Activated CD4-positive, alpha-beta T cell treated with anti-CD3 and anti-CD28 coated beads, Interleukin-2, amount 10 ng/mL, durations not matched to agents 24 days and 14 days (primary cell): ENCODE measurements at regions of chr11 and their contacts with region 1.

Region 1: GRCh38 chr11:18526521-18527296 is at the start of gene TSG101:
- DNase-seq: peak; percentile 98
- H3K4me3 Mint-ChIP-seq: peak within 1 kb of the TSS; percentile 99
- H3K27ac Mint-ChIP-seq: peak within 1 kb of the TSS; percentile 100
- H3K4me1 Mint-ChIP-seq: peaks cover 29% of the 10 kb centered on the region
- H3K27me3 Mint-ChIP-seq: no peaks in the 10 kb centered on the region
- total RNA-seq, gene TSG101: 39.6 and 43.5 TPM in 2 replicates

Region 2: DNA sequence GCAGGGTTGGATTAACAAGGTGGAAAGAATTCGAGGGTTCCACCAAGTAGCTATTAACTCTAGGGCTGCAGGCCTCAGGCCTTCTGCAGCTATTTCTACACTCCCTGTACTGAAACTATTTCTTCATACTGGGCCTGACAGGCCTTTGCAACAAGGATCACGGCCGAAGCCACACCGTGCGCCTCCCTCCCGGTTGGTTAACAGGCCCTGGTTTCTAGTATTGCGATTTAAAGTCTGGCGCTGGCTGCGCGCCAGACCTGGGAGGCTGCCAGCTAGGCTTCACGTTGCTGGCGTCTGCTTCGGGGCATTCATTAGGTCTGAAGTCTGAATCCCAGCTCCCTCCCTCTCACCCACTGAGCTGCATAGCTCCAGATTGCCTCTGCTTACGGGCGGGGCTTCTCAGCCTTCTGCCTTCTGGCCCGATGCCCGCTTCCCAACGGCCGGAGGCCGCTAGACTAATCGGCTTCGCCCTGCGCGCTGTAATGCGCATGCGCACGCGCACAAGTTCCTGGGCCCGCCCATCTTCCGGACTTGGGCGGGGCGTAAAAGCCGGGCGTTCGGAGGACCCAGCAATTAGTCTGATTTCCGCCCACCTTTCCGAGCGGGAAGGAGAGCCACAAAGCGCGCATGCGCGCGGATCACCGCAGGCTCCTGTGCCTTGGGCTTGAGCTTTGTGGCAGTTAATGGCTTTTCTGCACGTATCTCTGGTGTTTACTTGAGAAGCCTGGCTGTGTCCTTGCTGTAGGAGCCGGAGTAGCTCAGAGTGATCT is 130.8 kb before region 1 on chr11:
- intact Hi-C with region 1: loop called (anchors 1 kb)
- DNase-seq: peak; percentile 99
- H3K4me3 Mint-ChIP-seq: peak overlapping the region; percentile 97
- H3K27ac Mint-ChIP-seq: peak overlapping the region; percentile 98
- H3K4me1 Mint-ChIP-seq: peaks cover 54% of the 10 kb centered on the region
- H3K27me3 Mint-ChIP-seq: no peaks in the 10 kb centered on the region

Region 3: GRCh38 chr11:18588297-18589252 is 61.9 kb after region 1 on chr11 and contains the start of gene UEVLD:
- intact Hi-C with region 1: loop called (anchors 2 kb)
- DNase-seq: peak; percentile 91
- H3K4me3 Mint-ChIP-seq: no peak within 1 kb of the TSS
- H3K27ac Mint-ChIP-seq: no peak within 1 kb of the TSS
- H3K4me1 Mint-ChIP-seq: peaks cover 12% of the 10 kb centered on the region
- H3K27me3 Mint-ChIP-seq: no peaks in the 10 kb centered on the region
- total RNA-seq, gene UEVLD: 19.2 and 20.7 TPM in 2 replicates

Region 4: GRCh38 chr11:18721561-18722292 is 195.0 kb after region 1 on chr11:
- intact Hi-C with region 1: loop called (anchors 5 kb)
- DNase-seq: peak; percentile 85
- H3K4me3 Mint-ChIP-seq: peak overlapping the region; percentile 93
- H3K27ac Mint-ChIP-seq: no peak overlapping the region
- H3K4me1 Mint-ChIP-seq: peaks cover 8% of the 10 kb centered on the region
- H3K27me3 Mint-ChIP-seq: peaks cover 26% of the 10 kb centered on the region